CD8-positive, alpha-beta T cell (primary cell): ENCODE measurements at regions of chr3 and their contacts with region 1.

Region 1: DNA sequence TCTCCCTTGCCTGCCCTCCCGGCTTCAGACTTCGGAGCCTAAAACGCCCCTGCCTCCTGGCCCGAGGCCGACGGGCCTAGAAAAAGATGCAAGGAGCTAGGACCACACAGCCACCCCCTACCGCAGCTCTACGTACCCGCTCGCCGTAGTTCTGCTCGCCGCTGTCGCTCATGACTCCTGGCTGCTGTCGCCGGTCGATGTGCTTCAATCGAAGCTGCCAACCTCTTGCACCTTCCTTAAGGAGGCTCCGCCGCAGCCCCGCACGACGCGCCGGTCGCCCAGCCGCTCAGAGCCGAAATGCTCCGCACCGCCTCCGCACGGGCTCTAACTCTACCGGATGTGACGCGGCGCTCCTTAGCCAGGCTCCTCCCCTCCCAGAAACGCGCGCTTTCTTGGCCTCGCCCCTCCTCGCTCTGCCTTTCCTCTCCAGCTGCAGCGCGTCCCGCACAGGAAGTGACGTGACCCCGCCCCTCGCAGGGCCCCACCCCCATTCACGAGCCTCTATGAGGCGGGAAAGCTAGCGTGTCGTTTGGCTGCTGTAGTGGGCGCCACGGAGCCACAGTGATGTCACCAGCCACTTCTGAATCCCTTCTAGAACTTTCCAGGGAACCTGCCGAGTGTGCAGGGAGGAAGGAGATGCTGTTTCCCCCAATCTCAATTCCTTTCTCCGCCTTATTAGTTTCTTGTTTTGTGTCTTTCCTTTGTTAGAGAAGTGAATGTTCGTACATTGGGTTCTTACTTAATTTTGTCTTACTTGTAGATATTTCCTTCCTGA is at the start of gene TRA2B:
- DNase-seq: peak; percentile 97 to 99 (median 99)
- ATAC-seq: peak; percentile 88
- H3K4me3 ChIP-seq: peak within 1 kb of the TSS; percentile 93
- H3K4me3 Mint-ChIP-seq: peak within 1 kb of the TSS; percentile 100
- H3K27ac ChIP-seq: peak within 1 kb of the TSS; percentile 97 to 98
- H3K27ac Mint-ChIP-seq: peak within 1 kb of the TSS; percentile 100
- H3K4me1 ChIP-seq: peaks cover 13% of the 10 kb centered on the region
- H3K4me1 Mint-ChIP-seq: peaks cover 41% of the 10 kb centered on the region
- H3K27me3 ChIP-seq: no peaks in the 10 kb centered on the region
- H3K27me3 Mint-ChIP-seq: no peaks in the 10 kb centered on the region
- CTCF ChIP-seq: peak; percentile 41
- total RNA-seq, gene TRA2B: 455 to 472 TPM

Region 2: DNA sequence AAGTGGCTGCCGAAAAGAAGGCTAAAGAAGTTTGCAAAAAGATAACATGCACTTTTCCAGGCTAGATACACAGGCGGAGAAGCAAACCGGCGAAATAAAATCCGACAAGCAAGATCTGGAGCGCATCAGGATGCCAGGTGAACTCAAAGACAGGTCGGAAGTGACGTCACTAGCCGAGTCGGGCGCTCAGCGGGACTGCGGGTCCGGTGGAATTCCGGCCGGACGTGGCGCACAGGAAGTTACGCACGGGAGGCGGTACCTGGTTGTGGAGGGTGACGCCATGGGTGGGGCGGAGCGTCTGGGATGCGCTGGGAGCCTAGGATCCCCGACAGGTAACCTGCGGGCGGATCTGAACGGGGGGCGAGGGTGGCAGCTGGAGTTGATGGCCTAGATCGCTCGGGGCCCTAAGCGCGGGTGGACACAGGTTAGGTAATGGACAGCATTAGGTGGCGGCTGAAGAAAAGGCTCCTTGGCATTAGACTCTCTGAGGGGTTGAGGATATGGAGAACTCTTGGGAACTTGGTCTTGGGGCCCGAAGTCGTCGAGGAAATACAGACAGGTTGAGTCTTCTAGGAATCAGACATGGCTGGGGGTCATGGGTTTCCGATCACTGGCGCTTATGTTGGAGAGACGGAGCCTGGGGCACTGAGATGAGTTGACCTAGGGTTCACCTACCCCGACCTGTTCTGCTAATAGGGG is 655.0 kb before region 1 on chr3:
- CTCF ChIA-PET with region 1: no interaction called
- POLR2A ChIA-PET with region 1: no interaction called
- intact Hi-C with region 1: loop called in 1 of 2 experiments (anchors 10 kb)
- DNase-seq: peak; percentile 86 to 98 (median 95)
- ATAC-seq: peak; percentile 98
- H3K4me3 ChIP-seq: peak overlapping the region; percentile 75 to 82
- H3K4me3 Mint-ChIP-seq: peak overlapping the region; percentile 86
- H3K27ac ChIP-seq: peak overlapping the region; percentile 58 to 78
- H3K27ac Mint-ChIP-seq: peak overlapping the region; percentile 88
- H3K4me1 ChIP-seq: peaks cover 14% of the 10 kb centered on the region
- H3K4me1 Mint-ChIP-seq: peaks cover 18% of the 10 kb centered on the region
- H3K27me3 ChIP-seq: no peaks in the 10 kb centered on the region
- H3K27me3 Mint-ChIP-seq: peaks cover 24% of the 10 kb centered on the region
- CTCF ChIP-seq: no peak

Region 3: DNA sequence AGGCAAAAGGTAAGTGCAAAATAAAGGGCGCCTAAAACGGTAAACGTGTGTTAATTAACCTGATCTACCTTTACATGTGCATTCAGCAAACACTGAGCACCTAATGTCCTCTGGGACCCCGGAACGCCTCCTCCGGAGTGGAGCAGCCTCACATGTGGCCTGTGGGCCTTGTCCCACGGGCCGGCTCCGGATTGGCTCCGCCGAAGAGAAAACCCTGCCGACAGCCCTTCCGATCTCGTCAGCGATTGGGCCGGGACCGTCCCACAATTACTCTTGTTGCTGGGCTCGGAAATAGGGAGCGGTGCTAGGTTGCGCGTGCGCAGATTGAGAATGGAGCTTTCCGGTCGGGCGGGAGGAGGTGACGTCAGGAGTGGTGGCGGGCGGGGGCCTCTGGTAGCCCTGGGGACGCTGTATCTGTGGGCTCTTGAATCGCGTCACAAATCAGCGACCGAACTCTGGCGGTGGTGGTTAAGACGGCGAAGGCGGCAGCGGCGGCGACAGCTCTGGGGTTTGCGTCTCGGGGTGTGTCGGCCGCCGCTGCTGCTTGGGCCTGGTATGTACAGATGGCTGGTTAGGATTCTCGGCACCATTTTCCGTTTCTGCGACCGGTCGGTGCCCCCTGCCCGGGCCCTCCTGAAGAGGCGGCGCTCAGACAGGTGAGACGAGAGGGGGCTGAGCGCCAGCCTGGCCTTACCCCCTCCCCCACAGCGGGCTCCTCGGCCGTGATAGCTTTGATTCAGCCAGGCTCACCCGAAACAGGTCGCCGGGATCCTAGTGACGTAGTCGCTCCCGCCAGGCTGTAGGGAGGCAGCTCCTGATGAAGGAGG is 351.8 kb before region 1 on chr3 and contains the start of gene SENP2:
- CTCF ChIA-PET with region 1: no interaction called
- POLR2A ChIA-PET with region 1: interaction called, 7 read pairs
- intact Hi-C with region 1: loop called in 1 of 2 experiments (anchors 5 kb)
- DNase-seq: peak; percentile 99 to 100 (median 100)
- ATAC-seq: peak; percentile 87
- H3K4me3 ChIP-seq: peak within 1 kb of the TSS; percentile 74 to 100
- H3K4me3 Mint-ChIP-seq: peak within 1 kb of the TSS; percentile 85
- H3K27ac ChIP-seq: peak within 1 kb of the TSS; percentile 92 to 99
- H3K27ac Mint-ChIP-seq: peak within 1 kb of the TSS; percentile 92
- H3K4me1 ChIP-seq: peaks cover 28% of the 10 kb centered on the region
- H3K4me1 Mint-ChIP-seq: peaks cover 36% of the 10 kb centered on the region
- H3K27me3 ChIP-seq: no peaks in the 10 kb centered on the region
- H3K27me3 Mint-ChIP-seq: no peaks in the 10 kb centered on the region
- CTCF ChIP-seq: no peak
- total RNA-seq, gene SENP2: 57.0 to 69.6 TPM

Region 4: DNA sequence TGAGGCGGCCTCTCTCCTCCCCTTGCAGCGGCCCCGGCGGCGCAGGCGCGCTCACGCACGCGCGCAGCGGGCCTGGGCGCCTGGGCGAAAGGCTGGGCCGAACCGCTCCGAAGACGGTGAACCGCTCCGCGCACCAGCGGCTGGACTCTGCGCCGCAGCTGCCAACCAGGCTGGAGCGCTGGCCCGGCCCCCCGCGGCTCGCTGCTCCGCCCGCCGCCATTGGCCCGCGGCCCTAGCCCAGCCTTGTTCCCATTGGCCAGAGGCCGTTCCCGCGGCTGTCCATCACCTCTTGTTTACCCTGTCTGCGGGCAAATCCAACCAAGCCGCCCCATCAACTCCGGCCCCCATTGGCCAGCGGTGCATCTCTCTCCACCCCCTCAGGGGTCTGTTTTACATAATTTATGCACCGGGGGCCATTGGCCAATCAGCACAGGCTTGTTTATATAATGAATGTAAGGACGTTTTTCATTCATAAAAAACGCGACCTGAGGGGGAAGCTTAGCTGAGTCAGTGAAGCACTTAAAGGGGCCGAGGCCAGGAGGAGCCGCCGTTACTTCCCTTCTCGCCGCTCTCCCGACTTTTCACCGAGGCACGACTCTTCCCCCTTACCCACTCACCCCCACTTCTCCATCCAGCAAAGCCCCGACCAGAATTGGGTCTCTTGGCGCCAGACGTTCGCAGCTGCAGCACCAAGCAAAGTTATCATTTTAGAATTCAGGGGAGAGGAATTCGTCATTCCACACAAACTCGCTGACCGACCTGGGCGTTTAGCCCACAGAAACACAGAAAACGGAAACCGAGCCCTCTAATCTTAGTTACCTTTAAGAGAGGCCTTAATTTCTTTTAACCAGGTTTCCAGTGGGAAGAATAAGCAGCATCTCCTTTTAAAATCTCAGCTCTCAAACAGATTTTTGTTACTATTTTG is 171.3 kb after region 1 on chr3 and contains the start of gene ETV5:
- CTCF ChIA-PET with region 1: no interaction called
- POLR2A ChIA-PET with region 1: no interaction called
- intact Hi-C with region 1: loop called (anchors 2 to 5 kb)
- DNase-seq: peak; percentile 71 to 95 (median 85)
- ATAC-seq: peak; percentile 90
- H3K4me3 ChIP-seq: peak within 1 kb of the TSS; percentile 54 to 61
- H3K4me3 Mint-ChIP-seq: peak within 1 kb of the TSS; percentile 90
- H3K27ac ChIP-seq: no peak within 1 kb of the TSS
- H3K27ac Mint-ChIP-seq: peak within 1 kb of the TSS; percentile 78
- H3K4me1 ChIP-seq: peaks cover 34% of the 10 kb centered on the region
- H3K4me1 Mint-ChIP-seq: peaks cover 36% of the 10 kb centered on the region
- H3K27me3 ChIP-seq: peaks cover 33 to 43% of the 10 kb centered on the region in 2 experiments
- H3K27me3 Mint-ChIP-seq: peaks cover 77% of the 10 kb centered on the region
- CTCF ChIP-seq: no peak
- total RNA-seq, gene ETV5: 0.08 TPM in 1 of 2 experiments, not detected in the other

Region 5: GRCh38 chr3:186783073-186783730 is 845.3 kb after region 1 on chr3 and contains the start of gene EIF4A2:
- CTCF ChIA-PET with region 1: no interaction called
- POLR2A ChIA-PET with region 1: interaction called, 30 read pairs
- intact Hi-C with region 1: loop called (anchors 1 kb)
- DNase-seq: peak; percentile 79 to 96 (median 88)
- ATAC-seq: peak; percentile 67
- H3K4me3 ChIP-seq: peak within 1 kb of the TSS; percentile 90 to 95
- H3K4me3 Mint-ChIP-seq: peak within 1 kb of the TSS; percentile 99
- H3K27ac ChIP-seq: peak within 1 kb of the TSS; percentile 93 to 97
- H3K27ac Mint-ChIP-seq: peak within 1 kb of the TSS; percentile 99
- H3K4me1 ChIP-seq: peaks cover 38% of the 10 kb centered on the region
- H3K4me1 Mint-ChIP-seq: peaks cover 52% of the 10 kb centered on the region
- H3K27me3 ChIP-seq: no peaks in the 10 kb centered on the region
- H3K27me3 Mint-ChIP-seq: no peaks in the 10 kb centered on the region
- CTCF ChIP-seq: no peak
- total RNA-seq, gene EIF4A2: 934 to 978 TPM

Region 6: DNA sequence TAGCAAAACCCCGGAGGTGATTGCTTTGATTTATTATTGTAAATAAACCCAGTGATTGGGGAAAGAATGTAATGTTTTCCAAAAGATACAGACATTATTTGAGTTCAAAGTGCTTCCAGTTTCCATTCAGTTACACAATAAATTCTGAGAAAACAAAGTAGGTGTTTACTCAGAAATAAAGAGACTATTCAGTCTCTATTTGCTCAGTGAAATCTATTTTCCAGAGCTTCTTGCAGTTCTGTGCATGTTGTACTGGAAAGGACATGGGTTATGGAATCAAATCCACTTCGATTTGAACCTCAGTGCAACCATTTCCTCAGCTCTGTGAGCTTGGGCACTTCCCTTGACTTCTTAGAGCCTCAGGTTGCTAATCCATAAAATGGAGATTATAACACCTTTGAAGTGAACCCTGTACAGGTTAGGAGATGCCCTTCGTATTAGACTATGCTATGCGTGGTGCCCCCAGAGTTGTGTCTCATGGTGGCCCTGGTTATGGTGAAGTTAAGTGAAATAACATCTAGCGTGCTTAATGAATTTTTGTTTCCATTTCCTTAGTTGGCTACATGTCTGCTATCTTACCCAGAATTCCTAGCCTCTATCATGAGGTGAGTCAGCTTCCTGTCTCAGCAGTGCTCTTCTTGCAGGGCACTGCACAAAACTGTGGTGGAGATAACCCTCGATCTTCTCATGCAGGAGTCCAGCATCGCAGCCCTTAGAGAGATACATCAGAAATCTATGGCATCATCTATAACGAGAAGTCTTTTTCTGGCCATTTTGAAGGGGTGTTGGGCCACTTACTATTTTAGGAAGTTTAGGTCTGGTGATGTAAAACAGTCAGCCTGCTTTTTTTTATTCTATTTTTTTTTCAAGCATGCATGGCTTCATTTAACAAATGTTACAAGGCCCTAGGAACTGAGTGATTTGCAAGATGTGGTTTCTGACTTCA is 1103.8 kb after region 1 on chr3:
- CTCF ChIA-PET with region 1: no interaction called
- POLR2A ChIA-PET with region 1: no interaction called
- intact Hi-C with region 1: loop called in 1 of 2 experiments (anchors 10 kb)
- DNase-seq: peak in 8 of 9 experiments; percentile 38 to 84 (median 62)
- ATAC-seq: peak; percentile 95
- H3K4me3 ChIP-seq: peak overlapping the region in 1 of 2 experiments; percentile 5
- H3K4me3 Mint-ChIP-seq: peak overlapping the region; percentile 49
- H3K27ac ChIP-seq: peak overlapping the region; percentile 44 to 86
- H3K27ac Mint-ChIP-seq: peak overlapping the region; percentile 95
- H3K4me1 ChIP-seq: peaks cover 80% of the 10 kb centered on the region
- H3K4me1 Mint-ChIP-seq: peaks cover 82% of the 10 kb centered on the region
- H3K27me3 ChIP-seq: no peaks in the 10 kb centered on the region
- H3K27me3 Mint-ChIP-seq: no peaks in the 10 kb centered on the region
- CTCF ChIP-seq: no peak